WTC11 (cell line): ENCODE measurements at regions of chr12 and their contacts with region 1.

Region 1: DNA sequence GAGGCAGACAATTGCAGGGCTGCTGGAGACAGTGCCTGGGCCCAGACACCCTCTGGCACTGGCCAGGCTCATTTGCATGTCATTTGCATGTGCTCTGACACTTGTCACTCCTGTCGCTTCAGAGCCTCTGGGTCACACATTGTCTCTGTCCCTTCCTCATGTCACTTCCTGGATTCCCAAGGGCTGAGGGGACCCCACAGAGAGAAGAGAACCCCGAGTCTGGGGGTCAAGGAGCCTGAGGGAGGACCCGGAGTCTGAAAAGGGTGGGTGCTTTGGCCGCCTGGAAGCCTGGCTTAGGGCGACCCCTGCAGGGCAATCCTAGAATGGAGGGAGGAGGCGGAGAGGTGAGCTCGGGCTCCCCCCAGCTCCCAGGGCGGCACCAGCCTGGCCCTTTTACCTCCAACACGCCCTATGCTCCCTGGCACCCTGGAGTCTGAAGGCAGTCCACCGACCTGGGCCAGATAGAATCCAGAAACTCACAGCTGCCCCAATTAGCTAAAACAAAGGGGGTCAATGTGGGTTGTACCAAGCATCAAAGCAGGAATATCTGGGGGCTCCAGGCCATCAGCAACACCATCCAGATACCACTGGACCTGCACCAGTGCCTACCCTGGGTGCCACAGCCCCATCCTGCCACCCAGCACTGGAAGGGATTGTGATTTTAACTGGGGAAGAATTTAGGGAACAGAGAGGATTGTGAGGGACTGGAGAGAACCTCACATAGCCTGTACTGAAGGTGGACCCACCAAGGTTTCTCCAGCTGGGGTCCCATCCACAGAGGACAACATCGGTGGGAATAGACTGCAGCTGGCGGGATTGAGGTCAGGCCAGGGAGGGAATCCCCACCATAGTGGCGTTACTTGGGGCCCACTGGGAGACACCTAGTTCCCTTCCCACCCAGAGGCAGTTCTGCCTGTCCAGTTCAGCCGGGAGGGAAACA is 21.8 kb upstream of the KRT78 start:
- DNase-seq: peak; percentile 90
- ATAC-seq: peak; percentile 74
- H3K4me3 Mint-ChIP-seq: no peak overlapping the region
- H3K27ac Mint-ChIP-seq: no peak overlapping the region
- H3K4me1 Mint-ChIP-seq: peaks cover 16% of the 10 kb centered on the region
- H3K27me3 Mint-ChIP-seq: peaks cover 26% of the 10 kb centered on the region
- CTCF ChIP-seq: peak; percentile 86

Region 2: GRCh38 chr12:52582971-52583456 is 287.6 kb before region 1 on chr12:
- CTCF ChIA-PET with region 1: interaction called, 50 read pairs
- POLR2A ChIA-PET with region 1: interaction called, 3 read pairs
- DNase-seq: peak; percentile 74
- ATAC-seq: peak; percentile 97
- H3K4me3 Mint-ChIP-seq: no peak overlapping the region; the same call in 1 of the 2 replicates
- H3K27ac Mint-ChIP-seq: no peak overlapping the region
- H3K4me1 Mint-ChIP-seq: peaks cover 6% of the 10 kb centered on the region
- H3K27me3 Mint-ChIP-seq: no peaks in the 10 kb centered on the region
- CTCF ChIP-seq: no peak; the same call in none of the 2 replicates

Region 3: DNA sequence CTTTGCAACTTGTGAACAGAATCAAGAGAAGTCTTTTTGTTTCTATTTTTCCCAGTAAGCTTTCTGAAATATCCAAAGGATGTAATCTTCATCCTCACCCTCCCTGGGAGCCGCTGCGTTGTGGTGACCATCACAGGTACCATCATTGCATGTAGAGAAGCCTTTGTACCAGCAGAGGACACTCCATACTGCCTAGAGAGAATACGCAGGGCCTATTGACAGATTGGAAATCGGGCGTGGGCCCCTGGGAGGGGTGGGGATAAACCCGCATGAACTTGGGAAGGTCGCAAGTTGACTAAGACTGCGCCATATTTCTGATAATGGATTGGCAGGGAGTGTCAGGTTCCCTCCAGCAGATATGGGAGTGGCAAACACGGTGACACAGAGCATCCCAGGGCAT is 203.1 kb before region 1 on chr12:
- CTCF ChIA-PET with region 1: interaction called, 22 read pairs
- POLR2A ChIA-PET with region 1: no interaction called
- DNase-seq: peak; percentile 24
- ATAC-seq: peak; percentile 75
- H3K4me3 Mint-ChIP-seq: no peak overlapping the region
- H3K27ac Mint-ChIP-seq: no peak overlapping the region
- H3K4me1 Mint-ChIP-seq: no peaks in the 10 kb centered on the region
- H3K27me3 Mint-ChIP-seq: peaks cover 2% of the 10 kb centered on the region; the same call in 1 of the 2 replicates
- CTCF ChIP-seq: no peak

Region 4: DNA sequence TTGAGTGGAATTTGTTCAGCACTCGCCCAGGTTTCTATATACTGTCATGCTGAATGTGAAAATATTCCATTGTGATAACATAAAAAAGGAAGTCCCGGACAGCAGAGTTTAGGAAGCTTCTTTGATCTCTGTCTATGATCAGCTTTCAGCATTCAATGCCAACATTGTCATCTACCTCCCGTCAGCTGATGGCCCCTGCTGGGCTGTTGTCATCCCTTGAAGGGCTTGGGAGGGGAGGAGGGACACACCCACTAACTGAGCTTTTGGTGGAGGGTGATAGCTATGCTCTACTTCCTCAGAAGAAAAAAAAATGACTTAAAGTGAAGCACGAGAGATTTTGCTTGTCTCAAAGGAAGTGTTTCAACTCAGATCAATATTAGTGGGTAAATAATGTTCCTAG is 162.6 kb before region 1 on chr12:
- CTCF ChIA-PET with region 1: interaction called, 56 read pairs
- POLR2A ChIA-PET with region 1: no interaction called
- DNase-seq: no peak
- ATAC-seq: no peak
- H3K4me3 Mint-ChIP-seq: no peak overlapping the region
- H3K27ac Mint-ChIP-seq: no peak overlapping the region
- H3K4me1 Mint-ChIP-seq: no peaks in the 10 kb centered on the region; the same call in 1 of the 2 replicates
- H3K27me3 Mint-ChIP-seq: peaks cover 18% of the 10 kb centered on the region
- CTCF ChIP-seq: no peak

Region 5: DNA sequence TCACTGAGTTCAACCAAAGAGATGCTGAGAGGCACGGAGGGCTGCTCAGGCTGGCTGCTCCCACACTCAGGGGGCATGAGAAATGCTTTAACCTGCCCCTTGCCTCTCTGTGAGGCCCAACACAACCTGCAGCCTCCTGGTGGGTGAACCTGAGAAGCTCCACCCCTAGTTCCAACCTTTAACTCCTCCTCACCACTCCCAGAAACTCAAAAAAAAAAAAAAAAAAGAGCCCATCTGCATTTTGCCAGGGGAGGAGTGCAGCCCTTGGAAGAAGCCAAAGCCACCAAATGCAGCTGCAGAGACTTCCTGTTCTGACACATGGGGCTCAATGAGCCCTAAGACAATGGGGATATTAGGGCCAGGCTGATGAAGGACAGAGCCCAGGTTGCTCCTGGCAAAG is 65.6 kb before region 1 on chr12:
- CTCF ChIA-PET with region 1: interaction called, 13 read pairs
- POLR2A ChIA-PET with region 1: no interaction called
- DNase-seq: peak; percentile 45
- ATAC-seq: peak; percentile 93
- H3K4me3 Mint-ChIP-seq: no peak overlapping the region
- H3K27ac Mint-ChIP-seq: peak overlapping the region; percentile 47; the same call in 1 of the 2 replicates
- H3K4me1 Mint-ChIP-seq: peaks cover 42% of the 10 kb centered on the region
- H3K27me3 Mint-ChIP-seq: peaks cover 2% of the 10 kb centered on the region; the same call in 1 of the 2 replicates
- CTCF ChIP-seq: no peak

Region 6: GRCh38 chr12:53098982-53099651 is 228.5 kb after region 1 on chr12:
- CTCF ChIA-PET with region 1: no interaction called
- POLR2A ChIA-PET with region 1: no interaction called
- DNase-seq: peak; percentile 92
- ATAC-seq: peak; percentile 16
- H3K4me3 Mint-ChIP-seq: peak overlapping the region; percentile 90
- H3K27ac Mint-ChIP-seq: no peak overlapping the region
- H3K4me1 Mint-ChIP-seq: peaks cover 30% of the 10 kb centered on the region
- H3K27me3 Mint-ChIP-seq: peaks cover 54% of the 10 kb centered on the region
- CTCF ChIP-seq: peak; percentile 96

Region 7: DNA sequence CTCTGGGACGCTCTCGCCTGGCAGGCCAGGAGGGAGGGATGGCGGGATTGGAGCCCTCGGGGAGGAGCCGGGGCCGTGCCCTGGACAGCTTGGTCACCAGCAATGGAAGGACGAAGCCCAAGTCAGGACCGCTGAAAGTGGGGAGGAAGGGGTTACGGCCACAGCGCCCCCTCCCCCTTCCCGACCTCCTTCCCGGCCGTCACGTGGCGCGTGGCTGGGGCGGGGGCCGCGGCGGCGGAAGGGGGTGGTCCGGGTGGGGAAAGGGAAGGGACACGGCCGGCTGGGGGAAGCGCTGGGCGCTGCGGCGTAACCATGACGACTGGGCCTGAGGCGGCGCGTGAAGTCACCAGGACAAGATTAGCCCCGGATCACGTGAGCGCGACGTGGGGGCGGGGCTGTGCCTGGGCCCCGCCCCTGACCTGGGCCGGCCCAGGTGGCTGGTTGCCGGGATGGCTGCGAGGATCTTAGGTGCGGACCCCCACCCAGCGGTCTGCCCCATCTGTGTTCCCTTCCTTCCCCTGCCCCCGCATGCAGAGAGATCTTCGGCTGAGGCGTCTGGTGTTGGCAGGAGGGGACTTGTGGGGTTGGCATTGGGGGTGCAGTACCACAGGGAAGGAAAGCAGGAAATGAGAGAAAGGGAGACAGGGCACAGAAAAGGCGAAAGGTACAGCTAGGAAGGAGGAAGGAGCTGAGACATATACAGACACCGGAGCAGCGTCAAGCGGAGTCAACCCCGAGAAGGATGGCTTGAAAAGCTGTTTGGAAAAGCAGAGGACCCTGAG is 622.4 kb after region 1 on chr12:
- CTCF ChIA-PET with region 1: no interaction called
- POLR2A ChIA-PET with region 1: no interaction called
- DNase-seq: peak; percentile 96
- ATAC-seq: peak; percentile 78
- H3K4me3 Mint-ChIP-seq: peak overlapping the region; percentile 88
- H3K27ac Mint-ChIP-seq: peak overlapping the region; percentile 99
- H3K4me1 Mint-ChIP-seq: peaks cover 46% of the 10 kb centered on the region
- H3K27me3 Mint-ChIP-seq: no peaks in the 10 kb centered on the region
- CTCF ChIP-seq: no peak